ENCODE measurements at regions of chr3 and their contacts with region 1.

Region 1: DNA sequence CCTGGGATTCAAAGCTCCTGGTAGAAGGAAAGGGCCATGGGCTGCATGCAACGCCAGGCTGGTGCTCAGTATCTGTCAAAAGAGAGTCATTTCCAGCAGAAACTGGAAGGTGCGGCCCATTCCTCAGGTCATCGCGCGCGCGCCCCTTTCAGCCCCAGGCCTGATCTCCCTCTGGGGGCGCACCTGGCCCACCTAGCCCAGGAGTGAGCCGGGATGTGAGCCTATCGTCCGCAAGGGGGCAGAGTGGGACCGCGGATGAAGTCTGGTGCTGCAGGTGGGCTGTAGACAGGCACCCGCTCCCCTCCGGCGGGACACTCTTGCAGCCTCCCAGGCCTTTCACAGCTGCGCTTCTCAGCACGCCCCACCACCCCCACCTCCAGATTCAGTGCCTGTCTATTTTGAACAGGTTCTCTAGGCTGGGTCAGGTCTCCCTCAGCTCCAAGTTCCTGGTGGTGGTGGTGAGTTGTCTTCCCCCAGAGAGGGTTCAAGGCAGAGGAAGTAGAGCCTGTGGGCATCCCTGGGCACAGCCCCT is 5.8 kb upstream of the RPL29 start:
- DNase-seq: peak; percentile 91
- ATAC-seq: peak; percentile 99
- H3K4me3 ChIP-seq: no peak overlapping the region
- H3K4me3 Mint-ChIP-seq: no peak overlapping the region
- H3K27ac ChIP-seq: no peak overlapping the region
- H3K27ac Mint-ChIP-seq: peak overlapping the region; percentile 37
- H3K4me1 ChIP-seq: peaks cover 6 to 13% of the 10 kb centered on the region in 2 donors
- H3K4me1 Mint-ChIP-seq: peaks cover 5% of the 10 kb centered on the region
- H3K27me3 ChIP-seq: no peaks in the 10 kb centered on the region
- H3K27me3 Mint-ChIP-seq: peaks cover 6% of the 10 kb centered on the region
- CTCF ChIP-seq: peak; percentile 90

Region 2: DNA sequence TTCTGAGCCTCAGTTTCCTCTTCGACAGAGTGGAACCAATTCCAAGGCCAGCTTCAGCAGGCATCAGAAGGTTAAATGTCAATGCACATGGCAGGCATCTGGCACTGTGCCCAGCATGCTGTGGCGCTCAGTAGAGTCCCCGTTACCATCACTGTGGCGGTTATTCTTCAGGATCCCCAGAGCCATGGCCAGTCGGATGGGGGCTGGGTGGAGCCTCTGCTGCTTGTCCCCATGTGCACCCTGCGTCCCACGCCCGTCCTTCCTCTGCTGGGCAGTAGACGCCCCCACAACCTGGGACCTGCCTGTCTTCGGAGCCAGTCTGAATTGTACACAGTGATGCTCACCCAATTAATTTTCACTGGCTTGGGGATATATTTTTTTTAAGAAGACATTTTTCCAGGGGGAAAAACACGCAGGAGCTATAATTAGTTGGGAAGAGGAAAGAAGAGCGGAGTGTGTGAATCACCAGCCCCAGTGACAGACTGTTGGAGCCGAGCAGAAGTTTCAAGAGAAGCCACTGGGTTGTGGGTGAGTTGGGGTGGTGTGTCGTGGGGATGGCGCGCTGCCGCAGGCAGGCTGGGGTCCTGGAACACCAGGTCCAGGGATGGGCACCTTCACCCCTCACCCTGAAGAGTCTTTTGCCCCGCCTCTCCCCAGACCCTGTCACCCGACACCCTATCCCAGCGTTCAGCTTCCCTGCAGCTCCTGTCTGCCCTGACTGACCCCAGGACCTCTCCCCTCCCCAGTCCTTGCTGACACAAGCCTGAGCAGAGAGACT is 21.0 kb after region 1 on chr3:
- CTCF ChIA-PET with region 1: no interaction called
- POLR2A ChIA-PET with region 1: no interaction called
- intact Hi-C with region 1: no loop called
- DNase-seq: no peak
- ATAC-seq: no peak
- H3K4me3 ChIP-seq: no peak overlapping the region
- H3K4me3 Mint-ChIP-seq: no peak overlapping the region
- H3K27ac ChIP-seq: no peak overlapping the region
- H3K27ac Mint-ChIP-seq: no peak overlapping the region
- H3K4me1 ChIP-seq: peaks cover 10 to 14% of the 10 kb centered on the region in 2 donors
- H3K4me1 Mint-ChIP-seq: peaks cover 23% of the 10 kb centered on the region
- H3K27me3 ChIP-seq: no peaks in the 10 kb centered on the region
- H3K27me3 Mint-ChIP-seq: peaks cover 4% of the 10 kb centered on the region
- CTCF ChIP-seq: no peak

Region 3: DNA sequence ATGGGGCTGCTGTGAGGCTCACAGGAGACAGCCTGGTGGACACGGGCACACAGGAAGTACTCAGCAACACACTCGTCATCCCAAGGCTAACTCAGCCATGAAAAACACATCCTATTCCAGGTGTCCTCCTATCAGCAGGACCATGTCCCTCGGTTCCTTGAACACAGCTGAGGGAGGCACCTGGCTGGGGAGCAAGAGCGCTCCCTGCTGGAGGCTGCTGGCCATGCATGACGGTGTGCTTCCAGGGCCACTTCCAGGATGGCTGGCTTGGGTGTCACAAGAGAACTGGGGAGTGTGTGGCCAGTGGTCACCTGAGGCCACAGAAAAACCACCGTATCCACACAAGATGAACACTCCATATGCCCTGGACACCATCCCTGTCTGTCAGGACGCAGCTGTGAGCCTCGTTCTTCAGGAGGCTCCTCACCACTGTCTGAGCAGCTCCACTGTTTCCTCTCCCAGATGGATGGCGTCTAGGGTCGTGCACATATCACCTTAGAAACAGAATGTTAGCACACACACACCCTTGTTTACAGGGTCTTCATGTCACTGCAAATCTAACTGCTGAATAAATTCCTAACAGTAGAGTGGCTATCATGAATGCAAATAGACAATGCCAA is 121.7 kb after region 1 on chr3:
- CTCF ChIA-PET with region 1: interaction called, 60 read pairs
- POLR2A ChIA-PET with region 1: interaction called, 4 read pairs
- intact Hi-C with region 1: loop called (anchors 1 kb)
- DNase-seq: peak; percentile 76
- ATAC-seq: peak; percentile 73
- H3K4me3 ChIP-seq: peak overlapping the region in 1 of 5 experiments; percentile 27
- H3K4me3 Mint-ChIP-seq: no peak overlapping the region
- H3K27ac ChIP-seq: peak overlapping the region; percentile 49 to 81
- H3K27ac Mint-ChIP-seq: peak overlapping the region; percentile 90
- H3K4me1 ChIP-seq: peaks cover 34 to 35% of the 10 kb centered on the region in 2 donors
- H3K4me1 Mint-ChIP-seq: peaks cover 33% of the 10 kb centered on the region
- H3K27me3 ChIP-seq: no peaks in the 10 kb centered on the region
- H3K27me3 Mint-ChIP-seq: no peaks in the 10 kb centered on the region
- CTCF ChIP-seq: peak; percentile 84